Naive thymus-derived CD4-positive, alpha-beta T cell (primary cell): ENCODE measurements at regions of chr3 and their contacts with region 1.

Region 1: GRCh38 chr3:50235716-50236496 is at the start of gene GNAI2:
- DNase-seq: peak; percentile 95 to 99 (median 99)
- ATAC-seq: peak; percentile 93
- H3K4me3 ChIP-seq: peak within 1 kb of the TSS; percentile 90
- H3K4me3 Mint-ChIP-seq: peak within 1 kb of the TSS; percentile 92 to 99 (median 98)
- H3K27ac ChIP-seq: peak within 1 kb of the TSS; percentile 84
- H3K27ac Mint-ChIP-seq: peak within 1 kb of the TSS; percentile 87 to 97 (median 95)
- H3K4me1 ChIP-seq: peaks cover 30 to 35% of the 10 kb centered on the region in 2 donors
- H3K4me1 Mint-ChIP-seq: peaks cover 12 to 41% (median 37%) of the 10 kb centered on the region in 7 donors
- H3K27me3 ChIP-seq: no peaks in the 10 kb centered on the region
- H3K27me3 Mint-ChIP-seq: no peaks in the 10 kb centered on the region
- total RNA-seq, gene GNAI2: 225 to 442 (median 282) TPM

Region 2: GRCh38 chr3:49786241-49786958 is 449.5 kb before region 1 on chr3 and contains the start of gene IP6K1:
- CTCF ChIA-PET with region 1: no interaction called
- POLR2A ChIA-PET with region 1: no interaction called
- intact Hi-C with region 1: loop called in 1 of 2 experiments (anchors 5 kb)
- DNase-seq: peak; percentile 90 to 100 (median 99)
- ATAC-seq: peak; percentile 99
- H3K4me3 ChIP-seq: peak within 1 kb of the TSS; percentile 80
- H3K4me3 Mint-ChIP-seq: peak within 1 kb of the TSS; percentile 91 to 99 (median 94)
- H3K27ac ChIP-seq: peak within 1 kb of the TSS; percentile 95
- H3K27ac Mint-ChIP-seq: peak within 1 kb of the TSS; percentile 96 to 100 (median 99)
- H3K4me1 ChIP-seq: peaks cover 9 to 12% of the 10 kb centered on the region in 2 donors
- H3K4me1 Mint-ChIP-seq: peaks cover 15 to 50% (median 32%) of the 10 kb centered on the region in 7 donors
- H3K27me3 ChIP-seq: no peaks in the 10 kb centered on the region
- H3K27me3 Mint-ChIP-seq: peaks cover 0 to 6% (median 0%) of the 10 kb centered on the region in 5 donors
- total RNA-seq, gene IP6K1: 41.8 to 57.0 (median 47.3) TPM

Region 3: DNA sequence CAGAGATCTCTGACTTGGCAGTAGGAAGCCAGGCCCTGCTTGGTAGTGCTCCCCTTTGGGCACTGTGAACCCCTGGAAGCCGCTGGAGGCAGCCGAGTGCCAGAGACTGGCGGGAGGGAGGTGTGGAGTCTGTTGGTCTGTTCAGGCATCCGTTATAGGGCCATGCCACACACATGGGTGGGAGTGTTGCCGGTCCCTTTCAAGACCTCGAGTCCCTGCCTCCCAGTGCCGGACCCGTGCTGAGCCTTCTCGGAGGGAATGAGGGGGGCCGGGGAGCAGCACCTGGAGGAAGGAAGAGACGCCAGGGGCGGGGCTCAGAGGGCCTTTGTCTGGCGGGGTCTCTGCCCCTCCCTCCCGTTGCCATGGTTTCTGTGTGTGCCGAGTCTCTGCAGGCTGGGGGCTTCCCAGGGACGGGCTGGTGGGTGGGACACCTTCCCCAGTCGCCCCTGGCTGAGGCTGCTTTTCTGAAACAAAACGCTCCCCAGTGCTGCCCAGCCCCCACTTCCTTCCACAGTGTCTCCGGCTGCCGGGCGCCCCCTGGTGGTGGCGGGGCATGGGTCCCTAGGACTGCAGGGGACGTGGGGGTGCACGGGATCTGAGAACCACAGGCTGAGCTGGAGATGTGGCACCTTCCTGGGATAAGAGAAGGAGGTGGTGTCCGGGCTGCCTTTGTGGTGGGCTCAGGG is 10.1 kb after region 1 on chr3:
- CTCF ChIA-PET with region 1: interaction called, 211 read pairs
- POLR2A ChIA-PET with region 1: interaction called, 253 read pairs
- intact Hi-C with region 1: loop called (anchors 1 kb)
- DNase-seq: peak; percentile 88 to 99 (median 94)
- ATAC-seq: peak; percentile 90
- H3K4me3 ChIP-seq: peak overlapping the region; percentile 52
- H3K4me3 Mint-ChIP-seq: peak overlapping the region; percentile 77 to 89 (median 82)
- H3K27ac ChIP-seq: peak overlapping the region; percentile 88
- H3K27ac Mint-ChIP-seq: peak overlapping the region; percentile 80 to 96 (median 95)
- H3K4me1 ChIP-seq: peaks cover 61 to 87% of the 10 kb centered on the region in 2 donors
- H3K4me1 Mint-ChIP-seq: peaks cover 57 to 90% (median 74%) of the 10 kb centered on the region in 7 donors
- H3K27me3 ChIP-seq: no peaks in the 10 kb centered on the region
- H3K27me3 Mint-ChIP-seq: no peaks in the 10 kb centered on the region

Region 4: DNA sequence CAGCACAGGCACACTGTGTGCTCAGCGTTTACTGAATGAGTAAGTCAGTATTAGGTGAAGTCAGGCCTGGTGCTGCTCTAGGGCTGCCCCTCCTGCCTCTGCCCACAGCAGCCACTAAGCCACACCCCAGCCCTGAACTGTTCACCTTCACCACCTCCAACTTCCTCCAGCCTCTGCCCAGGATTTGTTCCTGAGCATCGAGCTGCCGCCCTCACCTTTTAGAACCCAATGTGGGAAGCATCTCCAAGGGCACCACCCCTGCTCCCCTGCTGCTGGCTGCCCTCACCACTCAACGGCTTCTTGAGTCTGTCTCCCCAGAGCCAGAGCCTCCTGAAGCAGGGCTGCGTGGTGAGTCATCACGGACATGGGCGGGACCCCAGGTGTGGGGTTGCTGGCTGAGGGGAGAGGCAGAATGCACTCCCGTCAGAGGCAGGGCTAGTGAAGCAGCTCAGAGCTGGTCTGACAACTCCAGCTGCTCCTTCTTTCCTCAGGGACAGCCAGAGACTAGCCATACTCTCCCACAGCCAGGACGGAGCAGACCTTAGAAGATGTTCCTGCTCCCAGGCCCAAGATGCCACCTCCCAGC is 80.8 kb after region 1 on chr3:
- CTCF ChIA-PET with region 1: no interaction called
- POLR2A ChIA-PET with region 1: no interaction called
- intact Hi-C with region 1: no loop called
- DNase-seq: no peak
- ATAC-seq: peak; percentile 45
- H3K4me3 ChIP-seq: no peak overlapping the region
- H3K4me3 Mint-ChIP-seq: peak overlapping the region in 3 of 10 donors; percentile 2 to 62 (median 28)
- H3K27ac ChIP-seq: no peak overlapping the region
- H3K27ac Mint-ChIP-seq: peak overlapping the region in 4 of 9 donors; percentile 14 to 83 (median 62)
- H3K4me1 ChIP-seq: peaks cover 9 to 23% of the 10 kb centered on the region in 2 donors
- H3K4me1 Mint-ChIP-seq: peaks cover 19 to 37% (median 32%) of the 10 kb centered on the region in 7 donors
- H3K27me3 ChIP-seq: no peaks in the 10 kb centered on the region
- H3K27me3 Mint-ChIP-seq: no peaks in the 10 kb centered on the region

Region 5: DNA sequence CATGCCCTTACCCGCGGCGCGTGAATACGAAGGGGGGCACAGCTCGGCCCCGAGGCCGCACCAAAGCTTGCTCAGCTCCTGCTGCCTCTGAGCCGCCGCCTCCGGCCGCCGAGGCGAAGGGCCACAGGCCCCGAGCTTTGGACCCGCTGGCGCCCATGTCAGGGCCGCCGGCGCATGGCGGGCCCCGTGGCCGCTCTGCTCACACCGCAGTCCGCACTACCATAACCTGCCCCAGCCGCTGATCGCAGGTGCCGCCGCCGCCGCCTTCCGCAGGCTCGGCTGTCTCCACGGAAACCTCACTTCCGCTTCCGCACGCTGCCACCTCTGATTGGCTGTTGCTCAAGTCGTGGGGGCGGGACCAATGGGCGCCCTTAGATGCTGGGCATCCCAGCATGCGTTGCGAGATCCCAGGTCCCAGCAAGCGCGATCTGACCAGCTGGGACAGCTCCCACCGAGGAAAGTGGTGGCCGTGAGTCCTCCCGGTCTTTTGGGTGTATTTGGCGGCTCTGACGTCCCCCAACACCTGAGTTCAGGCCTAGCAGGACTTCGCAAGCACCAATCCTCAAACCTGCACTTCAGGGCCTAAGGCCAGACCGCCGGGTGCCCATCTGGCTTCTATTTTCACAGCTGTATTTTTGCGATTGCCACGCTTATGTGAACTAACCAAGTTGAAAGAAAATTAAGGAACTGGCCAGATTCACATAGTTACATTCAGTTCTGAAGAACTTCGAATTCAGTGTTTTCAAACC is 92.2 kb after region 1 on chr3 and contains the start of gene TUSC2:
- CTCF ChIA-PET with region 1: interaction called, 4 read pairs
- POLR2A ChIA-PET with region 1: interaction called, 3 read pairs
- intact Hi-C with region 1: loop called in 1 of 2 experiments (anchors 2 kb)
- DNase-seq: peak; percentile 83 to 94 (median 92)
- ATAC-seq: peak; percentile 97
- H3K4me3 ChIP-seq: peak within 1 kb of the TSS; percentile 89
- H3K4me3 Mint-ChIP-seq: peak within 1 kb of the TSS; percentile 84 to 97 (median 95)
- H3K27ac ChIP-seq: peak within 1 kb of the TSS; percentile 92
- H3K27ac Mint-ChIP-seq: peak within 1 kb of the TSS; percentile 85 to 96 (median 94)
- H3K4me1 ChIP-seq: peaks cover 12 to 15% of the 10 kb centered on the region in 2 donors
- H3K4me1 Mint-ChIP-seq: peaks cover 7 to 41% (median 29%) of the 10 kb centered on the region in 7 donors
- H3K27me3 ChIP-seq: no peaks in the 10 kb centered on the region
- H3K27me3 Mint-ChIP-seq: no peaks in the 10 kb centered on the region
- total RNA-seq, gene TUSC2: 16.8 to 25.0 (median 20.5) TPM

Region 6: DNA sequence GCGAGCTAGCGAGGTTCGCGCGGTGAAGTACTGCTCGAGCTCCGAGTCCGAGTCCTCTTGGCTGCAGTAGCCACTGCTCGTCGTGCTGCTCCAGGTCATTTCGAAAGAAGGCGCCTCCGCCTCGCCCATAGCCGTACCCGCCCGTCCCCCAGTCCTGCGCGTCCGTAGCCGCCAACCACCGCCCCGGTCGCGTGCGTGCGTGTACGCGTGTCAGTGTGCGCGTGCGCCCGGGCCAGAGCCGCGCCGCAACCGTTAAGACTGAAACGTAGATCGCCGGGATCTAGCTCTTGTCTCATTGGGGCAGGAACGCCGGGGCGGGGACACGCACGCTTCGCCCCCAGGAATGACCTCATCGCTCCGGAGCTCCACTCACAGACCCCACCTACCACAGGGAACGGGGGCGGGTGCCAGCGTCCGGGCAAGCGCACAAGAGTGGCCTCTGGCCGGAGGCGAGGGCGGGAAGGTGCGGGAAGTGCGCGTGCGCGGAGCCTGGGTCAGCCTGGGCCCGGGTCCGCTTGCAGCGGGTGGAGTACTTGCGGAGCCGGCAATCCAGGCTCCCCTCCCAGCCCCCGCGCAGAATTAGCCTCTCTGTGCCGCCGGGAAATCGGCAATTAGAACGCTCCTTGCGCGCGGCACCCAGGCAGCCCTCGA is 101.4 kb after region 1 on chr3:
- CTCF ChIA-PET with region 1: no interaction called
- POLR2A ChIA-PET with region 1: interaction called, 6 read pairs
- intact Hi-C with region 1: loop called in 1 of 2 experiments (anchors 2 kb)
- DNase-seq: peak; percentile 83 to 98 (median 91)
- ATAC-seq: peak; percentile 88
- H3K4me3 ChIP-seq: peak overlapping the region; percentile 83
- H3K4me3 Mint-ChIP-seq: peak overlapping the region; percentile 92 to 97 (median 95)
- H3K27ac ChIP-seq: peak overlapping the region; percentile 92
- H3K27ac Mint-ChIP-seq: peak overlapping the region; percentile 92 to 97 (median 96)
- H3K4me1 ChIP-seq: peaks cover 43 to 58% of the 10 kb centered on the region in 2 donors
- H3K4me1 Mint-ChIP-seq: peaks cover 35 to 73% (median 68%) of the 10 kb centered on the region in 7 donors
- H3K27me3 ChIP-seq: no peaks in the 10 kb centered on the region
- H3K27me3 Mint-ChIP-seq: peaks cover 0 to 3% (median 0%) of the 10 kb centered on the region in 5 donors

Region 7: GRCh38 chr3:51275111-51275805 is 1039.4 kb after region 1 on chr3:
- CTCF ChIA-PET with region 1: no interaction called
- POLR2A ChIA-PET with region 1: no interaction called
- intact Hi-C with region 1: no loop called
- DNase-seq: no peak
- ATAC-seq: no peak
- H3K4me3 ChIP-seq: no peak overlapping the region
- H3K4me3 Mint-ChIP-seq: peak overlapping the region in 3 of 10 donors; percentile 35 to 61 (median 50)
- H3K27ac ChIP-seq: peak overlapping the region; percentile 6
- H3K27ac Mint-ChIP-seq: peak overlapping the region in 8 of 9 donors; percentile 19 to 87 (median 74)
- H3K4me1 ChIP-seq: peaks cover 6 to 27% of the 10 kb centered on the region in 2 donors
- H3K4me1 Mint-ChIP-seq: peaks cover 10 to 53% (median 40%) of the 10 kb centered on the region in 7 donors
- H3K27me3 ChIP-seq: no peaks in the 10 kb centered on the region
- H3K27me3 Mint-ChIP-seq: no peaks in the 10 kb centered on the region